ENCODE measurements at regions of chr11 and their contacts with region 1.

Region 1: GRCh38 chr11:102390667-102391465 is 43.9 kb downstream of the BIRC2 start:
- DNase-seq: peak; percentile 72
- H3K4me3 Mint-ChIP-seq: no peak overlapping the region
- H3K27ac Mint-ChIP-seq: peak overlapping the region; percentile 60
- H3K4me1 Mint-ChIP-seq: peaks cover 40% of the 10 kb centered on the region
- H3K27me3 Mint-ChIP-seq: no peaks in the 10 kb centered on the region

Region 2: GRCh38 chr11:102341844-102342318 is 49.0 kb before region 1 on chr11:
- CTCF ChIA-PET with region 1: interaction called, 18 read pairs
- POLR2A ChIA-PET with region 1: no interaction called
- intact Hi-C with region 1: loop called (anchors 2 kb)
- DNase-seq: peak; percentile 78
- H3K4me3 Mint-ChIP-seq: no peak overlapping the region
- H3K27ac Mint-ChIP-seq: peak overlapping the region; percentile 19
- H3K4me1 Mint-ChIP-seq: peaks cover 52% of the 10 kb centered on the region
- H3K27me3 Mint-ChIP-seq: no peaks in the 10 kb centered on the region

Region 3: DNA sequence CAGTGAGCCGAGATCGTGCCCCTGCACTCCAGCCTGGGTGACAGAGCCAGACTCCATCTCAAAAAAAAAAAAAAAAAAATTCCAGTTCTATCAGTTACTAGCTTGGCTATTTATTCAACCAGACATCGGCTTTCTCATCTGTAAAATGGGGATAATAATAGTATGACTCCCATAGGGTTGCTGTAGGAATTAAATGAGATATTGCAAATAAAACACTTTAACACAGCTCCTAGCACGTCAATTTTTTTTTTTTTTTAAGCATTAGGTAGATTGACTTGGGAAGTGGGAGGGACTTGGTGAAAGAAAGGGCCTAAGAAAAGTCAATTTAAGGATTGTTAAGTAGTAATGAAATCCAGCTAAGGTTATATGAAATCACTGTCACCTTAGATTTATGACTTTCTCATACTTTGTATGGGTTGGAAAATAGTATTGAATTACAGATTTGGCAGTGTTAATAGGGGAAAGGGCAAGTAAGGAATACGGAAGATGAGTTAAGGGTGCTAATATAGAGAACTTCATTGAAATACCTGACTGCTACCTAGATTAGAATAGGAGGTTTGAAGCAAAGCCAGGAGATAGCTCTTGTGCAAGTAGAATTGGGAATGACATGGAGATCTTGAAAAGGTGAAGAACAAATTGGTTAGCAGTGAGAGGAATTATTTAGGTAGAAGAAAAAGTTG is 15.0 kb before region 1 on chr11:
- CTCF ChIA-PET with region 1: interaction called, 38 read pairs
- POLR2A ChIA-PET with region 1: no interaction called
- intact Hi-C with region 1: no loop called
- DNase-seq: no peak
- H3K4me3 Mint-ChIP-seq: no peak overlapping the region
- H3K27ac Mint-ChIP-seq: no peak overlapping the region
- H3K4me1 Mint-ChIP-seq: peaks cover 22% of the 10 kb centered on the region
- H3K27me3 Mint-ChIP-seq: no peaks in the 10 kb centered on the region

Region 4: GRCh38 chr11:102430158-102430836 is 39.4 kb after region 1 on chr11:
- CTCF ChIA-PET with region 1: interaction called, 11 read pairs
- POLR2A ChIA-PET with region 1: no interaction called
- intact Hi-C with region 1: loop called (anchors 1 kb)
- DNase-seq: peak; percentile 74
- H3K4me3 Mint-ChIP-seq: peak overlapping the region; percentile 45
- H3K27ac Mint-ChIP-seq: peak overlapping the region; percentile 94
- H3K4me1 Mint-ChIP-seq: peaks cover 69% of the 10 kb centered on the region
- H3K27me3 Mint-ChIP-seq: no peaks in the 10 kb centered on the region

Region 5: DNA sequence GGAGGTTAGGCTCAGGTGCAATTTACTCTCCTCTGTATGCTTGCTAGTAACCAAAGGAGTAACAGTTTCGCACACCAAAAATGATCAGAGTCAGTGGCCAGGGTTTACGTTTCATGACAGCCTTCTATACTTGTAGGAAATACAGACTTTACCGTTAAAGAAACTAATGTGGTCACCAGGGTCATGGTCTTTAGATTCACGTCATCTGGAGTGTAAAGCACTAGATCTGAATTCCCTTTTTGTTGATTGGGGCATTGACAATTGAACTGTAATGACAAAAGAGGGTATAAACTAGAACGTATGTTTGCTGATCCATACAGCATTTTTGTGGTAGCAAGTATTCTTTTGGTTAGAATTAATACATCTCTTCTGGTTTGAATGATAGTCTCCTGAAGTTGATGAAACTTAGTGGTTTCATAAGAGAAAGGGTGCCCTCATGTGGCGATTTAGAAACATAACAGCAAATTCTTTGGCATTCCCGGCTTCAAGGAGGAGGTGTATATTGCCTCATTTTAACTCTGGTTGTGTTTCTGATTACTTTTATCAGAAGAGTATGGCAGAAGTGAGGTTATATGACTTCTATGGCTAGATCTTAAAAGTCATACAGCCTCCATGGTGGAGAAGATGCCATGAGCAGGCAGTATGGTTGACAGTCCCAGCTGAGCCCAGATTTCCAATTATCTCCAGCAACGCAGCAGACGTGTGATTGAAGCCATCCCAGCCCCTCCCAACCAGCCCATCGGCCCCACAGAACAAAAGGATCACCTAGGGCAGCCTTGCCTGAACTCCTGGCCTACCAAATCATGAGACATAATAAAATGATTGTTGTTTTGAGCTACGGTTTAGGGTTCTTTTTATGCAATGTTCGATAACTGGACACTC is 104.5 kb after region 1 on chr11:
- CTCF ChIA-PET with region 1: interaction called, 63 read pairs
- POLR2A ChIA-PET with region 1: no interaction called
- intact Hi-C with region 1: loop called (anchors 1 kb)
- DNase-seq: peak; percentile 22
- H3K4me3 Mint-ChIP-seq: no peak overlapping the region
- H3K27ac Mint-ChIP-seq: no peak overlapping the region
- H3K4me1 Mint-ChIP-seq: peaks cover 18% of the 10 kb centered on the region
- H3K27me3 Mint-ChIP-seq: peaks cover 7% of the 10 kb centered on the region

Region 6: DNA sequence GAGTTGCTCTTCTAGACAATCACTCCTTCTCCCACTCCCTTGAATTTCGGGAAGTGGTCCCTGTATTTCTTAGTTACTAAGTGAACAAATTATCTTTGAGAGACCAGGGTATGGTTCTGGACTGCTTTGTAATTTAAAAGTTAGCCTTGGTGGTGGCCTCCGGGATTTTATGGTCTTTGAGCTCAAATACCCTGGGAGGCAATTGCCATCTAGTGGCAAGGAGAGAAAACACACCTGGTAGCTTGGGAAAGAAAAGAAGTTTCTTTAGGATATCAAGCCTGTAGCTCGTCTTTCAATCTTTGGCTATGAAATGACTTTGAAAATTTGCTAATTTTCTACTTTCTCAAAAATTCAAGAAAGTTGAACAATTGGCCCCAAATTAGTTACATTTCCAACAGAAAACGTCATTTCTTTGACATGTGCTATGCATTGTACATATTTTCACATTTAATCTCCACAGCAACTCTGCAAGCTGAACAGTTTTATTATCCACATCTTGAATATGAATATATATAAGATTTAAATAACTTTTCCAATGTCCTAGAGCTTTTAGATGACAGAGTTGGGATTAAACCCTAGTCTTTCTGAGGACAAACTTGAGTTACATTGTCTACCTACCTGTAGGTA is 275.6 kb after region 1 on chr11:
- CTCF ChIA-PET with region 1: interaction called, 29 read pairs
- POLR2A ChIA-PET with region 1: no interaction called
- intact Hi-C with region 1: no loop called
- DNase-seq: peak; percentile 15
- H3K4me3 Mint-ChIP-seq: no peak overlapping the region
- H3K27ac Mint-ChIP-seq: no peak overlapping the region
- H3K4me1 Mint-ChIP-seq: no peaks in the 10 kb centered on the region
- H3K27me3 Mint-ChIP-seq: no peaks in the 10 kb centered on the region